ENCODE measurements at regions of chr2 and their contacts with region 1.

Region 1: GRCh38 chr2:136059036-136059472 is 58.9 kb downstream of the CXCR4 start:
- DNase-seq: no peak
- ATAC-seq: no peak
- H3K4me3 ChIP-seq: no peak overlapping the region
- H3K4me3 Mint-ChIP-seq: peak overlapping the region in 2 of 10 donors; percentile 43 to 50
- H3K27ac ChIP-seq: no peak overlapping the region
- H3K27ac Mint-ChIP-seq: peak overlapping the region in 5 of 9 donors; percentile 16 to 90 (median 65)
- H3K4me1 ChIP-seq: peaks cover 43 to 44% of the 10 kb centered on the region in 2 donors
- H3K4me1 Mint-ChIP-seq: peaks cover 46 to 90% (median 80%) of the 10 kb centered on the region in 7 donors
- H3K27me3 ChIP-seq: no peaks in the 10 kb centered on the region
- H3K27me3 Mint-ChIP-seq: no peaks in the 10 kb centered on the region

Region 2: GRCh38 chr2:136008205-136008865 is 50.7 kb before region 1 on chr2:
- CTCF ChIA-PET with region 1: interaction called, 8 read pairs
- POLR2A ChIA-PET with region 1: interaction called, 8 read pairs
- intact Hi-C with region 1: loop called in 1 of 2 experiments (anchors 5 kb)
- DNase-seq: peak; percentile 20 to 53 (median 33)
- ATAC-seq: peak; percentile 94
- H3K4me3 ChIP-seq: no peak overlapping the region
- H3K4me3 Mint-ChIP-seq: peak overlapping the region; percentile 7 to 77 (median 34)
- H3K27ac ChIP-seq: no peak overlapping the region
- H3K27ac Mint-ChIP-seq: peak overlapping the region; percentile 60 to 94 (median 75)
- H3K4me1 ChIP-seq: peaks cover 11 to 20% of the 10 kb centered on the region in 2 donors
- H3K4me1 Mint-ChIP-seq: peaks cover 17 to 48% (median 30%) of the 10 kb centered on the region in 7 donors
- H3K27me3 ChIP-seq: no peaks in the 10 kb centered on the region
- H3K27me3 Mint-ChIP-seq: no peaks in the 10 kb centered on the region

Region 3: DNA sequence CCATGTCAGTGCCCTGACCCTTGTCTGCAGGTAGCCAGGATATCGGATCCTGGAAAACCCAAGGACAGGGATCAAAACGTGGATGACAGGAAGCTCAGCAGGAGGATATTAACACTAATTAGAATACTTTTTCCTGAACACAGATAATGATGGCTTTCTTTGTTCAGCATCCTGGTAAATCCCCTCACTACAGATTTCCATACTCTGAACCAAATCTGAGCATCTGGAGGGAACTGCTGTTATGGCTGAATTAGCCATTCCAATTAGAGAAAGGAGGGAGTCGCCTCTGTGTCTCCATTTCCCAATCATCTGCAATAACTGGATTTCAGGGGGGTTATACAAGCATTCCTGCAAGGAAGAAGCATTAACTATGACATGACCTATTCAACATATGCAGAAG is 34.5 kb after region 1 on chr2:
- CTCF ChIA-PET with region 1: no interaction called
- POLR2A ChIA-PET with region 1: interaction called, 3 read pairs
- intact Hi-C with region 1: loop called in 1 of 2 experiments (anchors 5 kb)
- DNase-seq: no peak
- ATAC-seq: no peak
- H3K4me3 ChIP-seq: no peak overlapping the region
- H3K4me3 Mint-ChIP-seq: no peak overlapping the region
- H3K27ac ChIP-seq: no peak overlapping the region
- H3K27ac Mint-ChIP-seq: no peak overlapping the region
- H3K4me1 ChIP-seq: no peaks in the 10 kb centered on the region
- H3K4me1 Mint-ChIP-seq: peaks cover 9 to 23% (median 15%) of the 10 kb centered on the region in 7 donors
- H3K27me3 ChIP-seq: no peaks in the 10 kb centered on the region
- H3K27me3 Mint-ChIP-seq: peaks cover 0 to 3% (median 0%) of the 10 kb centered on the region in 5 donors

Region 4: GRCh38 chr2:136238286-136239078 is 179.4 kb after region 1 on chr2:
- CTCF ChIA-PET with region 1: no interaction called
- POLR2A ChIA-PET with region 1: interaction called, 3 read pairs
- intact Hi-C with region 1: loop called in 1 of 2 experiments (anchors 5 kb)
- DNase-seq: peak in 8 of 9 donors; percentile 33 to 75 (median 60)
- ATAC-seq: peak; percentile 84
- H3K4me3 ChIP-seq: no peak overlapping the region
- H3K4me3 Mint-ChIP-seq: peak overlapping the region; percentile 26 to 64 (median 48)
- H3K27ac ChIP-seq: peak overlapping the region; percentile 25
- H3K27ac Mint-ChIP-seq: peak overlapping the region; percentile 84 to 95 (median 90)
- H3K4me1 ChIP-seq: peaks cover 31 to 36% of the 10 kb centered on the region in 2 donors
- H3K4me1 Mint-ChIP-seq: peaks cover 32 to 60% (median 54%) of the 10 kb centered on the region in 7 donors
- H3K27me3 ChIP-seq: no peaks in the 10 kb centered on the region
- H3K27me3 Mint-ChIP-seq: no peaks in the 10 kb centered on the region

Measured in naive thymus-derived CD4-positive, alpha-beta T cell (primary cell).